Tibial artery (tissue), 4 donors: ENCODE measurements at regions of chr6 and their contacts with region 1.

Region 1: GRCh38 chr6:133921249-133921859 is 31.7 kb upstream of the TBPL1 start:
- DNase-seq: peak; percentile 86 to 92
- H3K4me3 ChIP-seq: no peak overlapping the region
- H3K27ac ChIP-seq: no peak overlapping the region
- H3K4me1 ChIP-seq: no peaks in the 10 kb centered on the region
- H3K27me3 ChIP-seq: peaks cover 0 to 7% of the 10 kb centered on the region in 2 donors
- CTCF ChIP-seq: peak; percentile 73 to 88

Region 2: DNA sequence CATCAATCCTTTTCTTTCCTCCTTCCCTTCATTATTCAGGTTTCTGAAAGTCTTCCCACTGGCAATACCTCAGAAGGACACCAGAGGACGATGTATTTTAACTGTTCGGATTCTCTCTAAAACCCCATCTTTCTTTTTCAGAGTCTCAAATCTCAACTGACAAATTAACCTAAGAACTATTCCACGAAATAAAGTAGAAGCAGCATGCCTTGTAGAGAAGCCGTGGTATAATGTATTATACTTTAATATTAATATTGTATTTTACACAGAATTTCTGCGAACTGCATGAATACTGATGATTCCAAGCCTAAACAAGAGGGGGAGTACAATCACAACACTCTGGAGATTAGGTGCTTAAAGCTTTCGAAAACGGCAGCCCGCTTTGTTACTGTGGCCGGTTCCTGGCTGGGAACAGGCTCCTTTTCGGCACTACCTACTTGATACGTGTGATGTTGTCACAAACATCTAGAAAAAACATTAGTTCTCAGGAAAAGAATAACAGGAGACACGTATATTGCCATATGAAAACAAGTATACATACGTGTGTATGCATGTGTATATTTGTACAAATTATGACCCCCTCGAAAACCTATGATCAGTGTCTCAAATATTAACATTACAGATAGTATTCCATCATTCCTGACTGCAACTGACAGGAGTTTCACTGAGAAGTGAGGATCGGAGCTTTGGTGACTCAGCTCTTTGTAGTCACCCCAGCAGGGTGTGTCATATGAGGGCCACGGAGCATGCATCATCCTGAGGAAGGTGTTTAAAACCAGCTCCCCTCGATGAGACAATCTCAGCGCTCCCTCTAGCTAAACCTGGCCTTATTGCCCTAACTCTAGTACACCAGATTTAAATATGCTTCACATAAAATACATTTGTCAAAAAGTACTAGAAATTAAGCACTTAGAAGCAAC is 352.1 kb before region 1 on chr6:
- intact Hi-C with region 1: loop called (anchors 2 kb)
- DNase-seq: no peak
- H3K4me3 ChIP-seq: peak overlapping the region; percentile 41
- H3K27ac ChIP-seq: no peak overlapping the region
- H3K4me1 ChIP-seq: peaks cover 0 to 8% (median 0%) of the 10 kb centered on the region in 4 donors
- H3K27me3 ChIP-seq: peaks cover 0 to 5% of the 10 kb centered on the region in 2 donors
- CTCF ChIP-seq: peak; percentile 98